ENCODE measurements at regions of chr11 and their contacts with region 1.

Region 1: GRCh38 chr11:2002807-2003206 is 5.2 kb upstream of the H19 start:
- DNase-seq: no peak
- ATAC-seq: peak; percentile 78
- H3K4me3 ChIP-seq: no peak overlapping the region
- H3K27ac ChIP-seq: no peak overlapping the region
- H3K4me1 ChIP-seq: no peaks in the 10 kb centered on the region
- H3K27me3 ChIP-seq: no peaks in the 10 kb centered on the region
- CTCF ChIP-seq: no peak
- EP300 ChIP-seq: no peak
- POLR2A ChIP-seq: no peak
- RAD21 ChIP-seq: no peak

Region 2: GRCh38 chr11:1652771-1653540 is 349.9 kb before region 1 on chr11:
- CTCF ChIA-PET with region 1: interaction called, 14 read pairs
- POLR2A ChIA-PET with region 1: no interaction called
- in situ Hi-C with region 1: no loop called
- intact Hi-C with region 1: no loop called
- DNase-seq: peak; percentile 72 to 91 (median 88)
- ATAC-seq: peak; percentile 96
- H3K4me3 ChIP-seq: no peak overlapping the region
- H3K27ac ChIP-seq: no peak overlapping the region
- H3K4me1 ChIP-seq: peaks cover 0 to 15% of the 10 kb centered on the region in 2 experiments; a peak in 2 of 5 replicates
- H3K27me3 ChIP-seq: peaks cover 34 to 89% of the 10 kb centered on the region in 2 experiments
- CTCF ChIP-seq: peak; percentile 85 to 91 (median 90)
- EP300 ChIP-seq: no peak
- POLR2A ChIP-seq: no peak
- RAD21 ChIP-seq: peak; percentile 84 to 91

Region 3: DNA sequence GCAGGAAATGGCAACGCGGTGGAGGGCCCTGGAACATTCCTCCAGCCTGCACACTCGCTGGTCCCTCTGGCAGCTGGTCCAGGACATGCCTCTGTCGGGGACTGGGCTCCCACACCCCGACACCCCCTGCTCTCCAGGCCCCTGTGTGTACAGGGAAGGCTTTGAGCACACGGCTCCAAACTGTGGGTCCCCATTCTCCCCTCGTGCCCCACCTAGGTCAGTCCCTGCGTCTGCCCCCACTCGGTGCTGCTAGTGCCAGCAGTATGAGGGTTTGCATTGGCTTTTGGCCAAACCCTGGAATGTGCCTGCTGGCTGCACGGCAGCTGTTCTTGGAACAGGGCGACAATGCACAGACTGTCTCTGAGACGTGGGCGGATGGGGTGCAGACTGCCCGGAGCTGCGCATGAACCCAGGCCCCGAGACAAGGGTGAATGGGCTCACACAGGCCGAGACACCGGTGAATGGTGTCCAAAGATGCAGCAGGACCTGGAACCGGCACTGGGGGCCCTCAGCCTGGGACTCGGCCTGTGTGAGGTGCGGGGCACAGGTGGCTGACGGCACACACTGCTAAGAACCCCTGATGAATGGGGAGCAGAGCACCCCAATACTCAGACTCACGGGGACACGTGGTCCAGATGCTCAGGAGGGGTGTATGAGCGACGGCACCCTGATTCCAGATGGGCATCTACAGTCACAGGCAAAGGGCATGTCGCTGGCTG is 175.6 kb before region 1 on chr11:
- CTCF ChIA-PET with region 1: interaction called, 19 read pairs
- POLR2A ChIA-PET with region 1: no interaction called
- in situ Hi-C with region 1: no loop called
- intact Hi-C with region 1: no loop called
- DNase-seq: no peak
- ATAC-seq: no peak
- H3K4me3 ChIP-seq: no peak overlapping the region
- H3K27ac ChIP-seq: no peak overlapping the region
- H3K4me1 ChIP-seq: peaks cover 0 to 50% of the 10 kb centered on the region in 2 experiments; a peak in 2 of 5 replicates
- H3K27me3 ChIP-seq: peaks cover 0 to 44% of the 10 kb centered on the region in 2 experiments; a peak in 3 of 5 replicates
- CTCF ChIP-seq: no peak
- EP300 ChIP-seq: no peak
- POLR2A ChIP-seq: no peak
- RAD21 ChIP-seq: no peak

Region 4: GRCh38 chr11:1876361-1877063 is 126.3 kb before region 1 on chr11:
- CTCF ChIA-PET with region 1: interaction called, 93 read pairs
- POLR2A ChIA-PET with region 1: interaction called, 3 read pairs
- in situ Hi-C with region 1: loop called (anchors 10 kb)
- intact Hi-C with region 1: no loop called
- DNase-seq: peak; percentile 63 to 73 (median 73)
- ATAC-seq: peak; percentile 79
- H3K4me3 ChIP-seq: no peak overlapping the region
- H3K27ac ChIP-seq: no peak overlapping the region
- H3K4me1 ChIP-seq: peaks cover 0 to 34% of the 10 kb centered on the region in 2 experiments; a peak in 2 of 5 replicates
- H3K27me3 ChIP-seq: peaks cover 0 to 58% of the 10 kb centered on the region in 2 experiments; a peak in 2 of 5 replicates
- CTCF ChIP-seq: peak; percentile 66 to 86 (median 78)
- EP300 ChIP-seq: no peak
- POLR2A ChIP-seq: no peak
- RAD21 ChIP-seq: peak; percentile 22 to 56; a peak in 2 of 4 replicates

Region 5: GRCh38 chr11:1908618-1909017 is 94.2 kb before region 1 on chr11:
- CTCF ChIA-PET with region 1: no interaction called
- POLR2A ChIA-PET with region 1: no interaction called
- in situ Hi-C with region 1: no loop called
- intact Hi-C with region 1: no loop called
- DNase-seq: no peak
- ATAC-seq: no peak
- H3K4me3 ChIP-seq: no peak overlapping the region
- H3K27ac ChIP-seq: no peak overlapping the region
- H3K4me1 ChIP-seq: no peaks in the 10 kb centered on the region
- H3K27me3 ChIP-seq: peaks cover 48 to 64% of the 10 kb centered on the region in 2 experiments
- CTCF ChIP-seq: no peak
- EP300 ChIP-seq: no peak
- POLR2A ChIP-seq: no peak
- RAD21 ChIP-seq: no peak

Region 6: DNA sequence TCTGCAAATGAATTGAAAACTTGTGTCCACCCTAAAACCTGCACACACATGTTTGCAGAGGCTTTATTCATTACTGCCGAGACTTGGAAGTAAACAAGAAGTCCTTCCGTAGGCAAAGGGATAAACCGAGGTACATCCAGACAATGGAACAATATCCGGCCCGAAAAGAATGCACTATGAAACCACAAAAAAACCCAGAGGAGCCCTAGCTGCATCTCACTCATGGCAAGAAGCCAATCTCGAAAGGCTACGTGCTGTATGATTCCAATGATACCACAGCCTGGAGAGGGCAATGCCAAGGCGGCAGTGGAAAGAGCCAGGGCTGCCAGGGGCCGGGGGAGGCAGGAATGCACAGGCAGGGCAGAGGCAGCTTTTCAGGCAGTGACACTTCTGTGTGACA is 58.8 kb before region 1 on chr11:
- CTCF ChIA-PET with region 1: interaction called, 25 read pairs
- POLR2A ChIA-PET with region 1: no interaction called
- in situ Hi-C with region 1: no loop called
- intact Hi-C with region 1: no loop called
- DNase-seq: no peak
- ATAC-seq: no peak
- H3K4me3 ChIP-seq: no peak overlapping the region
- H3K27ac ChIP-seq: no peak overlapping the region
- H3K4me1 ChIP-seq: peaks cover 0 to 19% of the 10 kb centered on the region in 2 experiments; a peak in 3 of 5 replicates
- H3K27me3 ChIP-seq: peaks cover 0 to under 1% of the 10 kb centered on the region in 2 experiments; a peak in 1 of 5 replicates
- CTCF ChIP-seq: no peak
- EP300 ChIP-seq: no peak
- POLR2A ChIP-seq: no peak
- RAD21 ChIP-seq: no peak

Region 7: GRCh38 chr11:2151500-2152257 is 148.9 kb after region 1 on chr11:
- CTCF ChIA-PET with region 1: interaction called, 14 read pairs
- POLR2A ChIA-PET with region 1: no interaction called
- in situ Hi-C with region 1: no loop called
- intact Hi-C with region 1: no loop called
- DNase-seq: peak; percentile 80 to 87 (median 82)
- ATAC-seq: peak; percentile 80
- H3K4me3 ChIP-seq: no peak overlapping the region
- H3K27ac ChIP-seq: no peak overlapping the region
- H3K4me1 ChIP-seq: peaks cover 0 to 26% of the 10 kb centered on the region in 2 experiments; a peak in 1 of 5 replicates
- H3K27me3 ChIP-seq: peaks cover 0 to 44% of the 10 kb centered on the region in 2 experiments; a peak in 3 of 5 replicates
- CTCF ChIP-seq: peak; percentile 75 to 83 (median 80)
- EP300 ChIP-seq: no peak
- POLR2A ChIP-seq: no peak
- RAD21 ChIP-seq: peak; percentile 53 to 76